MCF 10A (cell line): ENCODE measurements at regions of chr3 and their contacts with region 1.

Region 1: DNA sequence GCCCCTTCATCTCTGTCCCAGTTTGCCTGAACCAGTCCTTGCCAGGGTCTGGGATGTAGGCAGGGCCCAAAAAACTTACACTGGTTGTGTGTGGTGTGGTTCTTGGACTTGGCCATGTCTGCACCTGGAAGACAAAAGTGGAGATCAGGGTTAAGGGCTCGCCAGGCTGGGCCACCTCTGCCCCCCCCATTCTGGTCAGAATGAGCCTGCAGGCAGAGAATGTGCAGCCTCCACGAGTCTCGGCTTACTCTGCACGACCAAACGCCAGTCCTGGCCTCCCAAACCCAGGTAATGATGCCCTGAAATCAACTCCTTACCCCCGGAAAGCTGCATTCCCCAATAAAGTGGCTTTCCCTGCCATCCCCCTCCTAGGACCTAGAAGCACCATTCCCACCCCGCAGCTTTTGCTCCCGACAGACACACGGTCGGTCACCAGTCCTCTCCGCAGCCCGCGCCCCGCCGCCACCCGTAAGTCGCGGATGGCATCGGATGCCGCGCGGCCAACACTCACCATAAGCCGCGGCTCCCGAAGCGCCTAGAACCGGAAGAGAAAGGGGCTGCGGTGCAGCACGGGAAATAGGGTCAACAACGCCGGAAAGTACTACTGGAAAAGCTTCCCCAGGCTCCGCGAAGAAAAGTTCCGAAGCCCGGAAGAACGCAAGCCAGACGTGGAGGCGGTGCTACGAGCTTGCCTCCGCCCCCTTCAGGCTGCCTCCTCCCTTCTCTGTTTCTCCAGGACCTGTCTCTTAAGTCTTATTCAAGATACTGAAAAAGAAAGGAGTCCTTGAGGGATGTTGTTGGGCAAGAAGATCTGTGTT is at the start of gene RPL29:
- DNase-seq: peak; percentile 94
- H3K4me3 Mint-ChIP-seq: peak within 1 kb of the TSS; percentile 96
- H3K27ac Mint-ChIP-seq: peak within 1 kb of the TSS; percentile 100
- H3K4me1 Mint-ChIP-seq: peaks cover 8% of the 10 kb centered on the region
- H3K27me3 Mint-ChIP-seq: no peaks in the 10 kb centered on the region
- CTCF ChIP-seq: no peak
- total RNA-seq, gene RPL29: 1,551 and 1,602 TPM in 2 replicates

Region 2: GRCh38 chr3:51879937-51880336 is 115.6 kb before region 1 on chr3:
- CTCF ChIA-PET with region 1: no interaction called
- POLR2A ChIA-PET with region 1: no interaction called
- intact Hi-C with region 1: no loop called
- DNase-seq: peak; percentile 26
- H3K4me3 Mint-ChIP-seq: no peak overlapping the region
- H3K27ac Mint-ChIP-seq: no peak overlapping the region
- H3K4me1 Mint-ChIP-seq: no peaks in the 10 kb centered on the region
- H3K27me3 Mint-ChIP-seq: peaks cover 76% of the 10 kb centered on the region
- CTCF ChIP-seq: no peak

Region 3: DNA sequence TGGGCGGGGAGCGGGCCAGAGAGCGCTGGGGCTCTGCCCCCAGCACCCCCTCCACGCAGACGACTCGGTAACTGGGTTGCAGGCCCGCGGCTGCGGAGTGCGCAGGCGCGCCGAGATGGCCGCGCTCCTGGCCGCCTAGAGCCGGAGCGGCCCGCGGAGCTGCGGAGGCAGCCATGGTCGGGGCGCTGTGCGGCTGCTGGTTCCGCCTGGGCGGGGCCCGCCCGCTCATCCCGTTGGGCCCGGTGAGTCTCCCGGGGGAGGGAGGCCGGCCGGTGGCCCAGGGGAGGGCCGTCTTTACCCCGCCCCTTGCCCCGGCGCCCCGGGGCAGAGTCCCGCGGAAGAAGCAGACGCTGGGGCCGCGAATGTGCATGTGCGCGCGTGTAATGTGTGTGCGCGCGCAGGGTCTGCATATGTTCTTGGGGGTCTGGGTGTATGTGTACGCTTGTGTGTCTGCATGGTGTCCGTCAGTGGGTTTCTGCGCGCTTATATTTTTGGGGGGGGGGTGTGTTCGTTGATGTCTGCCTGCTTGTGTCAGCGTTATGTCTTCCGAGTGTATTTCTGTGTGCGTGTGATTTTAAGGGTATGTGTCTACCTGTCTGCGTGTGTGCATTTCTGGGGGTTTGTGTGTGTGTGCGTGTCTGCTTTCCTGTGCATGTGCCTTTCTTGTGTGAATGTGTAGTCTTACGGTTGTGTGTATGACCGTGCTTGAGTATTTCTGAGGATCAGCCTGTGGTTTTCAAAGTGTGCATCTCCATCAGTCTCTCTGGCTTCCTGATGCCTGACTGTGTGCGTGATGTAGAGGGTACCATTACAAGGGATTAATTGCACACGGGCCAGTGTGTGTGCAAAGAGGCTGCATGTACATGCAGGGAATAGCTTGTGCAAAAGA is 20.3 kb before region 1 on chr3 and contains the start of gene ABHD14A:
- CTCF ChIA-PET with region 1: interaction called, 8 read pairs
- POLR2A ChIA-PET with region 1: interaction called, 93 read pairs
- intact Hi-C with region 1: no loop called
- DNase-seq: peak; percentile 72
- H3K4me3 Mint-ChIP-seq: peak within 1 kb of the TSS; percentile 99
- H3K27ac Mint-ChIP-seq: peak within 1 kb of the TSS; percentile 88
- H3K4me1 Mint-ChIP-seq: peaks cover 29% of the 10 kb centered on the region
- H3K27me3 Mint-ChIP-seq: no peaks in the 10 kb centered on the region
- CTCF ChIP-seq: no peak
- total RNA-seq, gene ABHD14A: 4.0 and 8.1 TPM in 2 replicates

Region 4: DNA sequence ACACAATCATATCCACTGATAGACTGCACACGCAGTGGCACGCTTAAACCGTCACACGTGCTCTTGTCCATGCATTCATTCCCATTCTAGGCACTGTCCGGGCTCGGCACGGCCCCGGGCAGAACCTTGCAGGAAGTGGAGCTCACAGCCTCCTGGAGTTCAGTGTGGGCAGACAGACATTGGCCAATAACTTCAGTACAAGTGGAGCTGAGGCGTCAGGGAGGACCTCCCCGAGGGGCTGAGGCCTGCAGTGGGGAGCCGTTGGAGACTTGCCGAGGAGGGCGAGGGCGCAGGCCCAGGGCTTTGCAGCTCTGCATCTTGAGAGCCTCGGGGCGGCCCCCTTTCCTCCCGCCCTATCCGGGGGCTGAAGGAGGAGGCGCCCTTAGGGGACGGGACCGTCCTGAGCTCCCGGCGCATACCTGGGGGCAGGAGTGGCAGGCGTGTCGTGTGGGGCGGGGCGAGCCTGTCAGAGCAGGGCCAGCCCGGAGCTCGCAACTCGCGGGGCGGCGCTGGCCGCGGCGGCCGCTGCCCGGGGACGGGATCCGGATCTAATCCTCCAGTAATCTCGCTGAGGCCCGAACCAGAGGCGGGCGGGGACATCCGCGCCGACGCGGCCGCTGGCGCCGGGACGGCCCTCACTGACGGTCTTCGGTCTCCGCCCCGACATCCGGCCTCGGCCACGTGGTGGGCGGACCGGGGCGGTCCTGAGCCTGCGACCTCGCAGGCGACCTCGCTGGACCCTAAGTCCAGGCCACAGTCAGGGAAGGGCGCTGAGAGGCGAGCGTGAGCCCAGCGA is 12.6 kb before region 1 on chr3 and contains the start of gene ACY1:
- CTCF ChIA-PET with region 1: interaction called, 14 read pairs
- POLR2A ChIA-PET with region 1: interaction called, 93 read pairs
- intact Hi-C with region 1: no loop called
- DNase-seq: peak; percentile 87
- H3K4me3 Mint-ChIP-seq: peak within 1 kb of the TSS; percentile 87
- H3K27ac Mint-ChIP-seq: peak within 1 kb of the TSS; percentile 98
- H3K4me1 Mint-ChIP-seq: peaks cover 25% of the 10 kb centered on the region
- H3K27me3 Mint-ChIP-seq: no peaks in the 10 kb centered on the region
- CTCF ChIP-seq: no peak
- total RNA-seq, gene ACY1: 109 and 164 TPM in 2 replicates

Region 5: DNA sequence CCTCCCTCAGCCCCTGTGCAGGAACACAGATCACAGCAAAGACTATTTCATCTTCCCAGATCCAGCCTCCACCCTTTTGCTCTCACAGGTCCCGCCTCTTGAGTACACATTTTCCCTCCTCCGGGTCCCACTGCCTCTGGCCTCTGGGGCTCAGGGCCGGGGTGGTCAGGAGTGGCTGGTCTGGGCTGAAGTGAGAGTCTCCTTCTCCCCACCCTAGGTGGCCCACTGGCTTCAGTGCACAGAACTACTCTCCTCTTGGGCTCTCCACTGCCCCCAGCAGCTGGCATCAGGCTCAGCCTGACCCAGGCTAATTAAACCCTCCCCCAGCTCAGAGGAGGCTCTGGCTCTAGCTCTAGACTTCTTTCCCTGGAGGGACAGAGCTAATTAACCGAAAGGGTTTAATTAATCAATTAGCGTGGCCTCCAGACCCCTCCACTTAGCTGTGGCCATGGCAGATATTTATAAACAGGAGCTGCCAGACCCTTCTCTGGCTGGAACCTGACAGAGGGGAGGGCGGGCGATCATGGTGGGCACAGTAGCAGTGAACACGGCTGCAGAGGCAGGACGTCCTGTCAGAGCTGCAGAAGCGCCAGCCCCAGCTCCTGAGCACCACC is 45.7 kb after region 1 on chr3:
- CTCF ChIA-PET with region 1: interaction called, 15 read pairs
- POLR2A ChIA-PET with region 1: interaction called, 16 read pairs
- intact Hi-C with region 1: no loop called
- DNase-seq: no peak
- H3K4me3 Mint-ChIP-seq: no peak overlapping the region
- H3K27ac Mint-ChIP-seq: no peak overlapping the region
- H3K4me1 Mint-ChIP-seq: peaks cover 45% of the 10 kb centered on the region
- H3K27me3 Mint-ChIP-seq: no peaks in the 10 kb centered on the region
- CTCF ChIP-seq: no peak

Region 6: DNA sequence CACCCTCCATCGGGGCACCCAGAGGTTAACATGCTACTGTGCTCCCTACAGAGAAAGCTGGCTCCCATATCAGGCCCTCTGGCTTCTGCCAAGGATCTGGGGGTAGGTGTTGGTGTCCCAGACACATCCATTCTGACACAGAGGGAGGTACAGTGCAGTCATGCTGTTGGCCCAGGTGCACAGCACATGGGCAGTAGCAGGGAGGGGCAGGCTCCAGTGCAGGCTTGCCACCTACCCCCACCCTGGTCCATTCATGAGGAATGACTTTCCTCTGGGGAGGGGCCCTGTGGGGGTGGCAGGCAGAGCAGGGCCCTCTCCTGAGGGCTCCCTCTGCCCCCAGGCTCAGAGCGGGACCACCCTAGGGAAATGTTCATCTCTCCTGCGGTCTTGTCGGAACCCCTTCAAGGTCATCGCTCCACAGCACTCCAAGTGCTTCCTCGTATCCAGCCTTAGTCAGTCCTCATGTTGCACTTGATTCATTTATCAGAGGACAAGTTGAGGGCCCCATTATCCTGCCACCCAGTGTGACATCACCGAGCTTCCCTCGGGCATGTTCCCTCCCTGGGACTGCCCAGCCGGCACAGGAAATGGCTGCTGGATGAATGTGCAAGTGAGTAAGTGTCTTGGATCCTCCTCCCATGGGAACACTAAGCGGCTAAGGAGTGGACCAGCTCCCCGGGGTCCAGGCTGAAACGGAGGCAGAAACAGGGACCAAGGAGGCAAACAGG is 50.8 kb after region 1 on chr3:
- CTCF ChIA-PET with region 1: interaction called, 116 read pairs
- POLR2A ChIA-PET with region 1: interaction called, 16 read pairs
- intact Hi-C with region 1: no loop called
- DNase-seq: peak; percentile 99
- H3K4me3 Mint-ChIP-seq: peak overlapping the region; percentile 68
- H3K27ac Mint-ChIP-seq: peak overlapping the region; percentile 95
- H3K4me1 Mint-ChIP-seq: peaks cover 56% of the 10 kb centered on the region
- H3K27me3 Mint-ChIP-seq: no peaks in the 10 kb centered on the region
- CTCF ChIP-seq: no peak

Region 7: GRCh38 chr3:52136513-52136912 is 141.0 kb after region 1 on chr3:
- CTCF ChIA-PET with region 1: interaction called, 230 read pairs
- POLR2A ChIA-PET with region 1: interaction called, 10 read pairs
- intact Hi-C with region 1: no loop called
- DNase-seq: no peak
- H3K4me3 Mint-ChIP-seq: no peak overlapping the region
- H3K27ac Mint-ChIP-seq: no peak overlapping the region
- H3K4me1 Mint-ChIP-seq: no peaks in the 10 kb centered on the region
- H3K27me3 Mint-ChIP-seq: no peaks in the 10 kb centered on the region
- CTCF ChIP-seq: no peak

Region 8: GRCh38 chr3:52278510-52279069 is 283.0 kb after region 1 on chr3 and contains the start of gene WDR82:
- CTCF ChIA-PET with region 1: no interaction called
- POLR2A ChIA-PET with region 1: interaction called, 12 read pairs
- intact Hi-C with region 1: no loop called
- DNase-seq: peak; percentile 90
- H3K4me3 Mint-ChIP-seq: peak within 1 kb of the TSS; percentile 84
- H3K27ac Mint-ChIP-seq: peak within 1 kb of the TSS; percentile 99
- H3K4me1 Mint-ChIP-seq: peaks cover 26% of the 10 kb centered on the region
- H3K27me3 Mint-ChIP-seq: no peaks in the 10 kb centered on the region
- CTCF ChIP-seq: peak; percentile 38
- total RNA-seq, gene WDR82: 60.7 and 62.5 TPM in 2 replicates